Motor neuron (in vitro differentiated cells): ENCODE measurements at regions of chr16 and their contacts with region 1.

Region 1: DNA sequence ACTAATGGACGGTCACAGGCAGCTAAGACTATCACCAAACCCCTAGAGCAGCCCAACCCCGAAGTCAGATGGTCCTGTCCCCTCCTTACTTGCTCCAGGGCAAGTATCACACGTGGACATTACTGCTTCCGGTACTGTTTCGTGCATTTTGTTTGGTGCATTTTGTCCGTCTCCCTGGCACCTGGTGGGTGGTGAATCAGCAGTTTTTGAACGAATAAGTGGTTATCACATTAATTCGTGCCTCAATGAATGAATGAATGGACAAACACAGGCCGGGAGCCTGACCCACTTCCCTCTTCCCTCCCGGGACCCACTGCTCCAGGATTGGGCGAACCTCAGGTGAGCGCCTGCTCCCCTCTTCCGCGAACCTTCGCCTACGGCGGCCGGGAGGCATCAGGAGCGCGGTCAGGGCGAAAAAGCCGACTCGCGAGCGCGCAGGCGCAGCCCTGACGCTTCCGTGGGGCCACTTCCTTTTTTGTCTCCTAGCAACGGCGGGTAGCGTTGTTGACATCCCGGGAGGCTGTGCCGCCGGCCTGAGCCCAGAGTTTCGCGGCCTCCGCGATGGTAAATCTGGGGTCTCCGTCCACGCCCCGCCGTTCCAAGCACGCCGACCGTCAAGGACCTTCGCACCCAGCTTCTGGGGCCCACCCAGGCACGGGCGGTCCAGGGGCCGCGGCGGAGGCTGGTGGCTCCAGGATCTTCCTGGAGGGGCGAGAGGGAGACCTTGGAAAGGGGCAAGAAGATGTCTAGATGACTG is at the start of gene DYNLRB2:
- ATAC-seq: peak; percentile 95 to 99 (median 98)
- H3K4me3 ChIP-seq: peak within 1 kb of the TSS; percentile 46 to 72 (median 53)
- H3K27ac ChIP-seq: peak within 1 kb of the TSS; percentile 10 to 42
- H3K4me1 ChIP-seq: peaks cover 6 to 7% of the 10 kb centered on the region in 2 donors
- total RNA-seq, gene DYNLRB2: 0.47 to 7.2 (median 2.3) TPM in 5 of 8 experiments, not detected in the others

Region 2: DNA sequence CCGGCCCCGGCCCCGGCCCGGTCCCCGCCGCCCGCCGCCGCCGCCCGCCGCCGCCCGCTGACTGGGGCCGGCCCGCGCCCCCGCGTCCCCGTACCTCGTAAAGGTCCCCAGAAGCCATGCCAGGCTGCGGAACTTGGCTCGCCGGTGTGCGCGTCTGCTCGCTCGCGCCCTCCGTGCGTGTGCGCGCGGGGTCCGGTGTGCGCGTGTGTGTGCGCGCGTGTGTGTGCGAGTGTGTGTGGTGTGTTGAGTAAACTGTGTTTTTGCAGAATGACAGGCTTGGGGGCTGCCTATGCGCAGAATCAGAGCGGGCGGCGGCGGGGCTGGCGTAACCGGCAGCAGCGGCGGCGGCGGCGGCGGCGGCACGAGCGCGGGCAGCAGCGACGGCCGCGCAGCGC is 263.4 kb after region 1 on chr16:
- in situ Hi-C with region 1: loop called in 1 of 9 experiments (anchors 25 kb)
- ATAC-seq: peak; percentile 51 to 83 (median 74)
- H3K4me3 ChIP-seq: peak overlapping the region; percentile 62 to 89 (median 70)
- H3K27ac ChIP-seq: peak overlapping the region in 1 of 2 donors; percentile 59
- H3K4me1 ChIP-seq: no peaks in the 10 kb centered on the region

Region 3: DNA sequence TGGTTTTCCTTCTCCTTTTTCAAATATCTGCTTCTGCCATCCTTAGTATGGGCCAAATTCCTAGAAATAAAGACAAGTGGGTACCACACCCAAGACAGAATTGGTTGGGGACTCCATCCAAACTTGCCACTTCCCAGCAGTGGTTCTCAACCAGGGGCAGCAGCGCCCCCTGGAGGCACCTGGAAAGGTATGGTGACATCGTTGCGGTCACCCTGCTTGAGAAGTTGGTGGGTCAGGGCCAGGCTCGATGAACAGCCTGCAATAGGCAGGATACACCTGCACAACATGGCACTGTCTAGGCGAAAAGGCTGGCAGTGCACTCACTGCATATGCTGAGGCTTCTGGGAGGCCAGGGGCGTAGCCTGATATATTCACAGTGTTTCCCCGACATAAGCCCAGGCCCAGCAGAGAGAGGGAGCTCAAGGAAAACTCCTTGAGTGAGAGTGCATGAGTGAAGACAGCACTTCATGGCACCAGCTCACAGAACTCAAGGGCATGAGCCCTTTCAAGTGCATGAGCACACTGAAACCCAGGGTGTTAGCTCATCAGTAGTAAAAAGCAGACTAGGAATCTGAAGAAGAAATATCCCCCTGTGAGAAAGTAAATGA is 408.3 kb after region 1 on chr16:
- in situ Hi-C with region 1: loop called in 1 of 9 experiments (anchors 25 kb)
- ATAC-seq: peak in 7 of 8 experiments; percentile 21 to 96 (median 41)
- H3K4me3 ChIP-seq: no peak overlapping the region
- H3K27ac ChIP-seq: no peak overlapping the region
- H3K4me1 ChIP-seq: peaks cover 5 to 8% of the 10 kb centered on the region in 2 donors